ENCODE measurements at regions of chr16 and their contacts with region 1.

Region 1: DNA sequence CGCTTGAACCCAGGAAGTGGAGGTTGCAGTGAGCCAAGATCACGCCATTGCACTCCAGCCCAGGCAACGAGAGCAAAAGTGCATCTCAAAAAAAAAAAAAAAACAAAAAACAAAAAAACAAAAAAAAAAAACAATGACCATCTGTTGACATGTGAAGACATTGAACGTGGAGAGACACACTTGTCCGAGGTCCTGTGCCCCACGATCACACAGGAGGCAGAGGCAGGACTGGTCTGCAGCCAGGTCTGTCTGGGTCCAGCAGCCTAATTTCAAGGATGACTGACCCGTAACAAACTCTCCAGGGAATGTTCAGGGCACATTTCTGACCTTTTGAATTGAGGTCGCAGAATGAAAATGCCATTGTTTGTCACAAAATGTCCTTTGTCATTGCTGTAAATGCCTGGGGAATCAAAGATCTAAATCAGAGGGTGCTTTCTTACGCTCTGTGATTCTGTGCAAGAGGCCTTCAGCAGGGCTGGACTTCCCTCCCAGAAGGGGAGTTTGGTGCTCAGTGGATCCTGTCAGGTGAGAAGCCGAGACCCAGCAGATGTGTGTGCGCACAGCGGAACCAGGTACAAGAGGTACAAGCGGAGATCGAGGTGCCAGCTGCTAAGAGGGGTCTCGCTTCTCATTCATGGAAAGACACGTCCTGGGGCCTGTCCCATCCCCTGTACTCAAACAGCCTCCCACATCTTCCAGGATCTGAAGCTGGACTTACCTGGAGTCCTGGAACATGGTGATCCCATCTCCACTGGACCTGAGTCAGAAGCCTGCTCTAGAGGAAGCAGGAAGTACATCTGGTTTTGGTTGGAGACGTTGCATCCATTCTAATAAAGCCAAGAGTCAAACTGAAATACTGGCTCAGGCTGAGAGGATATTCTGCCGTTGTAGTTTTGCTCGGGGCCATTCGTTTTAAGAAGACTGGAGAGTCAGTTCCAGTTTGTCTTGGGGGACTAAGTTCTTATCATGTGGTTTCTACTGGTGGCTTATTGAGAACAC is 95.8 kb downstream of the IRF8 start:
- DNase-seq: no peak
- H3K4me3 ChIP-seq: no peak overlapping the region
- CTCF ChIP-seq: no peak

Region 2: GRCh38 chr16:85853547-85854545 is 140.9 kb before region 1 on chr16:
- in situ Hi-C with region 1: loop called (anchors 5 kb)
- DNase-seq: no peak
- H3K4me3 ChIP-seq: no peak overlapping the region
- CTCF ChIP-seq: no peak

Region 3: DNA sequence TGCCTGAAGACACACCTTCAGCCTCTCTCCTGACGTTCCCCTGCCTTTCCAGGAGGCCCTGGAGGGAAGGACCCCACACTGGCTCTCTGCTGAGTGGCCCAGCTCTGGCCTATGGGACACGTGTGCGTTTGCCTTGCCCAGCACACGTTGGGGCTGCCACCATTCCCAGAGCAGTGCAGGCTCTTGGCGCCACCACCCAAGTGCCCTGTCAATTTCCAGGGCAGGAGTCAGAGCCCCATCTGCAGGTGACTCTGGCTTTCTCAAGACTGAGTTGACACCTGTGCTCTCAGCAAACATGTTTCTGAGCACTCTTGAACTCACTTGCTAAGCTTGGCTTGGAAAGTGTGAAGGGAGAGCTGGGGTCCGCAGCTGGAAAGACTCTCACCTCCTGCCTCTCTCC is 100.5 kb before region 1 on chr16:
- in situ Hi-C with region 1: loop called (anchors 5 kb)
- DNase-seq: no peak
- H3K4me3 ChIP-seq: no peak overlapping the region
- CTCF ChIP-seq: no peak

Region 4: GRCh38 chr16:85947230-85948137 is 47.3 kb before region 1 on chr16:
- in situ Hi-C with region 1: loop called (anchors 5 kb)
- DNase-seq: no peak
- H3K4me3 ChIP-seq: no peak overlapping the region
- CTCF ChIP-seq: no peak

Region 5: DNA sequence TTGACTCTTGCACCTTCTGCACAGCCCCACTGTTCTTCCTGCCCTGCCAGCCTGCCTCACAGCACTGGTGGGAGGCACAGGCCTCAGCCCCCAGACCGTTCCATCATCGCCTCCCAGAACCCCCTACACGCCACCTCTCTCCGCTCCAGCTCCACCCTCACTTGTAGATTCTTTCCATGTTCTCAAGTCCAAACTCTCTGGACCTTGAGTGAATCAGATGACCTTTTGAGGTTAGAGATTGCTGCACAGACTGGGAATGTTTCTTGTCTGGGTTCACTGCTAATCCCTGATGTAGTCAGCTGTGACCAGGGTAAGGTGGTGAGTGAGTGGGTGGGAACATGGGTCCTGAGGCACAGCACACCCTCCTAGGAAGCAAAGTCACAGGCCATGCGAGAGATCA is 176.5 kb after region 1 on chr16:
- in situ Hi-C with region 1: no loop called
- DNase-seq: no peak
- H3K4me3 ChIP-seq: no peak overlapping the region
- CTCF ChIP-seq: no peak